K562 (cell line): ENCODE measurements at regions of chr2 and their contacts with region 1.

Region 1: DNA sequence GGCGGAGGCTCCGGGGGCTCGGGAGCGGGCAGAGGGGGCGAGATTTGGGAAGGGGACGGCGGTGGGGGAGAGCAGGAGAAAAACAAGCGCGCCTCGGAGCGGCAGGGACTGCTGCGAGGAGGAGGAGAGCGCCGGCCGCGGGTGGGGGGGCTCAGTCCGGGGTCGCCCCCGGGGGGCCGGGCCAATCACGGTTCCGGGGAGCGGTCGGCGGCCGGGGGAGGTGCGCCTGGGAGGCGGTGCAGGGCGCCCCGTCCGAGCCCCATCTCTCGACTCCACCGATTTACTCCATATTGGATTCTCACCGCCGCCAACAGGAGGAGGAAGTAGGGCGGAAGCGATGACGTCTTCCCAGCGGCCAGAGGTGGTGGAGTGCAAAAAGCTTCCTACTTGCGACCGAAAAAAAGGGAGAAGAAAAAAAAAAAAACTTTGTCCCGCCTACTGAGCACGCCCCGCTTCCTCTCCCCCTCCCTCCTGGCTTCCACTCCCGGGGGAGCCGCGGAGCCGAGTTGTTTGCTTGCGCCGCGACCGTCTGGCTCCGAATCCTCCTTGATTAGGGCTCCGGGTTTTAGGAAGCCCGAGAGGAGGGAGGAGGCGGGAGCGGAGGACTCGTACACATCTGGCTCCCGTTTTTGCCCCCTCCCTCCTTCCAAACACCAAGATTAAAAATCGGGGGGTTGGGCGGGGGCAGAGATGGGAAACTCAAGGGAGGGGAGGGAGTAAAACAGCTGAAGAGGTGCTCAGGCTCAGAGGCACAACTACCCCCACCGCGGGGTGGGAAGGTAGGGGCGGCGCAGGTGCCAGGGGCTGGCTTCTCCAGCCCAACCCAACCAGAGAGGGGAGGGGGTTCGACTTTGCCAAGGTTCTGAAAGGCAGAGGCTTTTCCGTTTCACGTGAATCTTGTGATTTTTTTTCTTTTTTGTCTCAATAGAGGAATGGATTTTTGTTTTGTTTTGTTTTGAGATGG is at the start of gene SPRED2:
- DNase-seq: peak; percentile 80 to 97 (median 86)
- ATAC-seq: peak; percentile 64
- H3K4me3 ChIP-seq: peak within 1 kb of the TSS; percentile 85
- H3K27ac ChIP-seq: peak within 1 kb of the TSS; percentile 92
- H3K4me1 ChIP-seq: peaks cover 31 to 52% of the 10 kb centered on the region in 2 experiments
- H3K27me3 ChIP-seq: no peaks in the 10 kb centered on the region
- CTCF ChIP-seq: peak in 2 of 3 experiments; percentile 10; a peak in 3 of 6 replicates
- EP300 ChIP-seq: peak; percentile 68
- POLR2A ChIP-seq: peak; percentile 79
- RAD21 ChIP-seq: peak; percentile 28 to 33
- polyA plus RNA-seq, gene SPRED2: 4.6 to 6.4 TPM

Region 2: GRCh38 chr2:64548761-64549160 is 883.7 kb before region 1 on chr2:
- CTCF ChIA-PET with region 1: no interaction called
- POLR2A ChIA-PET with region 1: no interaction called
- in situ Hi-C with region 1: no loop called
- intact Hi-C with region 1: no loop called
- DNase-seq: no peak
- ATAC-seq: no peak
- H3K4me3 ChIP-seq: no peak overlapping the region
- H3K27ac ChIP-seq: no peak overlapping the region
- H3K4me1 ChIP-seq: no peaks in the 10 kb centered on the region
- H3K27me3 ChIP-seq: no peaks in the 10 kb centered on the region
- CTCF ChIP-seq: no peak
- EP300 ChIP-seq: no peak
- POLR2A ChIP-seq: no peak
- RAD21 ChIP-seq: no peak

Region 3: GRCh38 chr2:65264821-65265670 is 167.5 kb before region 1 on chr2:
- CTCF ChIA-PET with region 1: interaction called, 4 read pairs
- POLR2A ChIA-PET with region 1: interaction called, 3 read pairs
- in situ Hi-C with region 1: no loop called
- intact Hi-C with region 1: loop called (anchors 2 kb)
- DNase-seq: peak; percentile 25 to 83 (median 32)
- ATAC-seq: peak; percentile 89
- H3K4me3 ChIP-seq: no peak overlapping the region
- H3K27ac ChIP-seq: no peak overlapping the region
- H3K4me1 ChIP-seq: no peaks in the 10 kb centered on the region; a peak in 1 of 5 replicates
- H3K27me3 ChIP-seq: no peaks in the 10 kb centered on the region
- CTCF ChIP-seq: peak; percentile 48 to 81 (median 70); a peak in 5 of 6 replicates
- EP300 ChIP-seq: no peak
- POLR2A ChIP-seq: no peak
- RAD21 ChIP-seq: peak; percentile 88 to 94

Region 4: DNA sequence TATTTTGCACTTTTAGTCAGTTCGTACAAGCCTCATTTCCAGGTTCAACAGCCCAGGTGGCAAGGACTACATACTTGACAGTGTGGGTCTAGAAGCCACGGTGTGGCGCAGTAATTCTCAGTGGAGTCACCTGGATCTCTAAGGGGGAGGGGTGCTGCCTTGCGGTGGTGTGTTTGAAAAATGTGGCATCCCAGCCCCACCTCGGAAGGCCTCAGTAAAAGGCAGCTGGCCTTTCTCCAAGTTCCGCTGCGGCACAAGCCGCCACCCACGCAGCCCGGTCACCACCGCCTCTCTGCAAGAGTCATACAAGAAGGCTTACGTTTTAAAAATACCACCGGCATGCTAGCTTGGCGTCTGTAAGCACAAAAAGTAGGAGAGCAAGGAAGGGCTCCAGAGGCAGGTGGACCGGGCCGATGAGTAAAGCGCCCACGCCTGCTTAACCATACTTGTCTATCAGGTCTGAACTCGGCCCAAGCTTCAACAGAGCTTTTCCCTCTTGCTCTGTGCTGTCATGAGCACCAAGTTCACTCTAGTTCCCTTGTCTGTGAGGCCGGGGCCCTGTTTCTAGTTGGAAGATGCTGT is 49.6 kb before region 1 on chr2:
- CTCF ChIA-PET with region 1: no interaction called
- POLR2A ChIA-PET with region 1: interaction called, 8 read pairs
- in situ Hi-C with region 1: no loop called
- intact Hi-C with region 1: loop called (anchors 2 kb)
- DNase-seq: peak; percentile 85 to 97 (median 87)
- ATAC-seq: peak; percentile 86
- H3K4me3 ChIP-seq: no peak overlapping the region; the same call in 1 of the 2 replicates
- H3K27ac ChIP-seq: peak overlapping the region; percentile 69
- H3K4me1 ChIP-seq: peaks cover 27 to 81% of the 10 kb centered on the region in 2 experiments
- H3K27me3 ChIP-seq: no peaks in the 10 kb centered on the region
- CTCF ChIP-seq: peak; percentile 35 to 56 (median 54); a peak in 4 of 6 replicates
- EP300 ChIP-seq: peak; percentile 47; the same call in 1 of the 2 replicates
- POLR2A ChIP-seq: no peak
- RAD21 ChIP-seq: peak; percentile 28 to 55; a peak in 2 of 4 replicates

Region 5: GRCh38 chr2:65420712-65421431 is 11.6 kb before region 1 on chr2:
- CTCF ChIA-PET with region 1: no interaction called
- POLR2A ChIA-PET with region 1: interaction called, 63 read pairs
- in situ Hi-C with region 1: no loop called
- intact Hi-C with region 1: no loop called
- DNase-seq: peak in 2 of 4 experiments; percentile 51 to 58
- ATAC-seq: peak; percentile 83
- H3K4me3 ChIP-seq: no peak overlapping the region
- H3K27ac ChIP-seq: peak overlapping the region; percentile 16; the same call in 1 of the 3 replicates
- H3K4me1 ChIP-seq: peaks cover 0 to 23% of the 10 kb centered on the region in 2 experiments; a peak in 4 of 5 replicates
- H3K27me3 ChIP-seq: no peaks in the 10 kb centered on the region
- CTCF ChIP-seq: no peak
- EP300 ChIP-seq: no peak
- POLR2A ChIP-seq: no peak
- RAD21 ChIP-seq: no peak

Region 6: GRCh38 chr2:65458999-65459398 is 26.5 kb after region 1 on chr2:
- CTCF ChIA-PET with region 1: no interaction called
- POLR2A ChIA-PET with region 1: interaction called, 21 read pairs
- in situ Hi-C with region 1: no loop called
- intact Hi-C with region 1: no loop called
- DNase-seq: no peak
- ATAC-seq: no peak; the same call in 2 of the 3 replicates
- H3K4me3 ChIP-seq: no peak overlapping the region
- H3K27ac ChIP-seq: no peak overlapping the region
- H3K4me1 ChIP-seq: no peaks in the 10 kb centered on the region; a peak in 1 of 5 replicates
- H3K27me3 ChIP-seq: no peaks in the 10 kb centered on the region
- CTCF ChIP-seq: no peak
- EP300 ChIP-seq: no peak
- POLR2A ChIP-seq: no peak
- RAD21 ChIP-seq: no peak

Region 7: GRCh38 chr2:65545837-65546805 is 113.6 kb after region 1 on chr2:
- CTCF ChIA-PET with region 1: no interaction called
- POLR2A ChIA-PET with region 1: interaction called, 14 read pairs
- in situ Hi-C with region 1: no loop called
- intact Hi-C with region 1: no loop called
- DNase-seq: no peak
- ATAC-seq: no peak
- H3K4me3 ChIP-seq: no peak overlapping the region
- H3K27ac ChIP-seq: no peak overlapping the region
- H3K4me1 ChIP-seq: no peaks in the 10 kb centered on the region; a peak in 1 of 5 replicates
- H3K27me3 ChIP-seq: no peaks in the 10 kb centered on the region
- CTCF ChIP-seq: no peak
- EP300 ChIP-seq: no peak
- POLR2A ChIP-seq: no peak
- RAD21 ChIP-seq: no peak

Region 8: GRCh38 chr2:65991381-65992197 is 559.1 kb after region 1 on chr2:
- CTCF ChIA-PET with region 1: no interaction called
- POLR2A ChIA-PET with region 1: no interaction called
- in situ Hi-C with region 1: no loop called
- intact Hi-C with region 1: no loop called
- DNase-seq: no peak
- ATAC-seq: no peak
- H3K4me3 ChIP-seq: no peak overlapping the region
- H3K27ac ChIP-seq: no peak overlapping the region
- H3K4me1 ChIP-seq: no peaks in the 10 kb centered on the region
- H3K27me3 ChIP-seq: no peaks in the 10 kb centered on the region
- CTCF ChIP-seq: no peak
- EP300 ChIP-seq: no peak
- POLR2A ChIP-seq: no peak
- RAD21 ChIP-seq: no peak